ENCODE measurements at regions of chr2 and their contacts with region 1.

Region 1: DNA sequence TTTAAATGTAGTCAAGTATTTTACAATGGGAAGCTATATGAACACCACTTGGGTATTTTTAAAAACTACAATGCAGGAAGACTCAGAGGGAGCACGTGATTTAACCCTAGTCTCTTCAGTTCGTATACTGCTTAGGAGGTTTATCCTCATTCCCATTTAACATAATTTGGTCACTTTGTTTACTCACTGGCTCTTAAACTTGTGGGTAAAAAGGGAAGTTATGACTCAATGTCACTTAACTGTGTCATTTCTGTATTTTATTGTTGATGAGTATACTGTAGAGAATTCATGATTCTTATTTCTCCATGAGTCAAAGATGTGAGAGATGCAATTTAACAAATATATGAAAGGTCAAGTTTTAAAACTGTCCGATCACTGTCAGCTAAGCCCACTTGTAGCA is 48.2 kb downstream of the SLC66A3 start:
- DNase-seq: no peak
- H3K4me3 Mint-ChIP-seq: no peak overlapping the region
- H3K27ac Mint-ChIP-seq: peak overlapping the region; percentile 10
- H3K4me1 Mint-ChIP-seq: peaks cover 16% of the 10 kb centered on the region
- H3K27me3 Mint-ChIP-seq: no peaks in the 10 kb centered on the region

Region 2: GRCh38 chr2:11154923-11155380 is 48.5 kb before region 1 on chr2:
- intact Hi-C with region 1: loop called (anchors 2 kb)
- DNase-seq: peak; percentile 94
- H3K4me3 Mint-ChIP-seq: peak overlapping the region; percentile 85
- H3K27ac Mint-ChIP-seq: peak overlapping the region; percentile 83
- H3K4me1 Mint-ChIP-seq: peaks cover 12% of the 10 kb centered on the region
- H3K27me3 Mint-ChIP-seq: peaks cover 7% of the 10 kb centered on the region

Region 3: GRCh38 chr2:11270891-11271290 is 67.4 kb after region 1 on chr2:
- intact Hi-C with region 1: loop called (anchors 2 kb)
- DNase-seq: no peak
- H3K4me3 Mint-ChIP-seq: no peak overlapping the region
- H3K27ac Mint-ChIP-seq: peak overlapping the region; percentile 75
- H3K4me1 Mint-ChIP-seq: peaks cover 20% of the 10 kb centered on the region
- H3K27me3 Mint-ChIP-seq: no peaks in the 10 kb centered on the region

Measured in activated T-helper 1 cell treated with anti-CD3 and anti-CD28 coated beads, Interleukin-12 subunit alpha, Interleukin-12 subunit beta, Interleukin-2, Interleukin-4 antibody, amounts not matched to agents 30 ng/mL and 10 ng/mL and 1 ng/mL, durations not matched to agents 14 hours and 24 hours and 36 hours (primary cell).